ENCODE measurements at regions of chr2 and their contacts with region 1.

Region 1: GRCh38 chr2:230007931-230008707 is 60.6 kb downstream of the SLC16A14 start:
- DNase-seq: peak; percentile 83
- H3K4me3 ChIP-seq: no peak overlapping the region
- H3K27ac ChIP-seq: no peak overlapping the region
- H3K4me1 ChIP-seq: no peaks in the 10 kb centered on the region
- H3K27me3 ChIP-seq: no peaks in the 10 kb centered on the region
- CTCF ChIP-seq: peak; percentile 52 to 94 (median 84)
- POLR2A ChIP-seq: no peak

Region 2: GRCh38 chr2:229873123-229873581 is 135.0 kb before region 1 on chr2:
- intact Hi-C with region 1: no loop called
- DNase-seq: no peak
- H3K4me3 ChIP-seq: no peak overlapping the region
- H3K27ac ChIP-seq: no peak overlapping the region
- H3K4me1 ChIP-seq: peaks cover 3% of the 10 kb centered on the region
- H3K27me3 ChIP-seq: no peaks in the 10 kb centered on the region
- CTCF ChIP-seq: no peak
- POLR2A ChIP-seq: no peak

Region 3: GRCh38 chr2:230068016-230068650 is 60.0 kb after region 1 on chr2:
- intact Hi-C with region 1: loop called (anchors 5 kb)
- DNase-seq: peak; percentile 44
- H3K4me3 ChIP-seq: peak overlapping the region; percentile 47 to 66
- H3K27ac ChIP-seq: peak overlapping the region; percentile 81 to 88
- H3K4me1 ChIP-seq: no peaks in the 10 kb centered on the region
- H3K27me3 ChIP-seq: no peaks in the 10 kb centered on the region
- CTCF ChIP-seq: peak in 2 of 4 experiments; percentile 25 to 38
- POLR2A ChIP-seq: no peak

Region 4: DNA sequence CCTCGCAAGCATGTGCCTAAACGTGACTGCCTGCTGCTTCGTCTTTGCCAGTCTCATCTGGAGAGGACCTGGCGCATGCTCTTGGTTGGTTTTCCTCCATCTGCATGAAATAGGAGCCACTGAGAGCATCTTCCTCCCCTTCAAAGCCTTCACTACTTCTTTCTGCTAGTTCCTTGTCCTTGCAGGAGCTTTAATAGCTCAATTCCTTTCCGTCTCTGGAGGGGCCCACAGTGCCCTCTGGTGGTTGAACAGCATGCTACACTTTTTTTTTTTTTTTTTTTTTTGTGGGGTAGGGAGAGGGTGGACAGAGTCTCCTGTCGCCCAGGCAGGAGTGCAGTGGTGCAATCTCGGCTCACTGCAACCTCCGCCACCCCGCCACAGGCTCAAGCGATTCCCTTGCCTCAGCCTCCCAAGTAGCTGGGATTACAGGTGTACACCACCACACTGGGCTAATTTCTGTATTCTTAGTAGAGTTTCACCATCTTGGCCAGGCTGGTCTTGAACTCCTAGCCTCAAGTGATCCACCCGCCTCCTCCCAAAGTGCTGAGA is 152.1 kb after region 1 on chr2:
- intact Hi-C with region 1: loop called (anchors 5 kb)
- DNase-seq: no peak
- H3K4me3 ChIP-seq: no peak overlapping the region
- H3K27ac ChIP-seq: no peak overlapping the region
- H3K4me1 ChIP-seq: no peaks in the 10 kb centered on the region
- H3K27me3 ChIP-seq: no peaks in the 10 kb centered on the region
- CTCF ChIP-seq: peak; percentile 64 to 75 (median 67)
- POLR2A ChIP-seq: no peak

Region 5: DNA sequence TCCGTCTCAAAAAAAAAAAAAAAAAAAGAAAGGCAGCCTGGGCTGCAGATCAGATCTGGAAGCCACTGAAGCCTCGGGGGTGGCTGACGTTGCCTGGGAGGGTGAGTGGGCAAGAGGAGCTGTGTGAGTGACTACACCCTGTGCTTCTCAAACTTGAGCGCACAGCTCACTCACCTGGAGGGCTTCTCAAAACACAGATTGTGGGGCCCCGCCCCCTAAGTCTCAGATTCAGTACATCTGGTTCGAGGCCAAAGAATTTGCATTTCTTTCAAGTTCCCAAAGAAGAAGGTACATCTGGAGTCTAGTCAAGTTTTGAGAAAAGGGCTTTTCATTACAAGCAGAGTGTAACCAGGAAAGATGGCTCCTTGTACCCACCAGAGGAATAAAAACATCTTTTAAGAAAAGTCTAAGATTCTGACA is 606.8 kb after region 1 on chr2:
- intact Hi-C with region 1: loop called (anchors 5 kb)
- DNase-seq: no peak
- H3K4me3 ChIP-seq: no peak overlapping the region
- H3K27ac ChIP-seq: no peak overlapping the region
- H3K4me1 ChIP-seq: no peaks in the 10 kb centered on the region
- H3K27me3 ChIP-seq: no peaks in the 10 kb centered on the region
- CTCF ChIP-seq: no peak
- POLR2A ChIP-seq: no peak